ENCODE measurements at regions of chr3 and their contacts with region 1.

Region 1: DNA sequence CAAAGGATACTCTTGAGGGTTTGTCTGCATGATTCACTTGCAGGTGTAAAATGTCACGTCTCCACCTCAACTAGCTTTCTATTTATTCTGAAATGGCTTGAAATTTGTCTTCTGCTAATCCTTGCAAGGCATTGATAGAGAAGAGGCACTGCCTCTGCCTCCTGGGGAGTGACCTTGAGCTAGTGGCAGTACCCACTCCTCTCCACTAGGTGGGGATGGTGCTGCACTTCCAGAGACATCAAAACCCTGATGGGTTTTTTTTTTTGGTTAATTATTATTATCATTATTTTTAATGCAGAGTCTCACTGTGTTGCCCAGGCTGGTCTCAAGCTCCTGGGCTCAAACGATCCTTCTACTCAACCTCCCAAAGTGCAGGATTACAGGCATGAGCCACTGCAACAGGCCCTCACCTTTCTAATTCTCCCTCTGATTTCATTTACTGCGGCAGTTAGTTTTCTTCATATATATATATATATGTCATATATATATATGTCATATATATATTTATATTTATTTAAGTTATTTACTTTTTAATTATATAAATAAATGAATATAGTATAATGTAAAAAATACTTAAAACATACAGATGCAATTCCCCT is 117.6 kb upstream of the EIF1B start:
- H3K4me3 Mint-ChIP-seq: no peak overlapping the region
- H3K27ac Mint-ChIP-seq: no peak overlapping the region
- H3K4me1 Mint-ChIP-seq: no peaks in the 10 kb centered on the region
- H3K27me3 Mint-ChIP-seq: no peaks in the 10 kb centered on the region

Region 2: DNA sequence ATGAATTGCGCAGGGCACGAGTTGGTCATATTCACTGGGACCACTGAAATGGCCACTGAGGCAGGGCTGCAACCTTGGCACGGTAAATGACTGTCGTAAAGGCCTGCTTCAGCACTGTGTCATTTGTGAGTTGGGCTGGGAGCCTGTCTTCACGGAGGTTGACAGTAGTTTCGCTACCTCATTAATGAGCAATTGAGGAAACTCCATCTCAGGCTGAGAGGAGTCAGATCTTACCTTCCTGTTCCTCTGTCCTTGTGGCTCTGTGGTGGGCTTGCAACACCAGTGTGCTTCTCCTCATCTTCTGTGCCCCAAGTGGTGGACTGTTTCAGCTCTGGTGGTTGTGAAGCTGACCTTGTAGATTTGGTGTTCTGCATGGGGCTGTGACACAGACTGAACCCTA is 37.4 kb after region 1 on chr3:
- intact Hi-C with region 1: loop called (anchors 5 kb)
- H3K4me3 Mint-ChIP-seq: no peak overlapping the region
- H3K27ac Mint-ChIP-seq: peak overlapping the region; percentile 53
- H3K4me1 Mint-ChIP-seq: peaks cover 22% of the 10 kb centered on the region
- H3K27me3 Mint-ChIP-seq: peaks cover 7% of the 10 kb centered on the region

Region 3: GRCh38 chr3:40317061-40317855 is 125.3 kb after region 1 on chr3:
- intact Hi-C with region 1: loop called (anchors 1 kb)
- H3K4me3 Mint-ChIP-seq: no peak overlapping the region
- H3K27ac Mint-ChIP-seq: no peak overlapping the region
- H3K4me1 Mint-ChIP-seq: peaks cover 27% of the 10 kb centered on the region
- H3K27me3 Mint-ChIP-seq: no peaks in the 10 kb centered on the region

Region 4: GRCh38 chr3:40524568-40525285 is 332.8 kb after region 1 on chr3 and contains the start of gene ZNF621:
- intact Hi-C with region 1: loop called (anchors 5 kb)
- H3K4me3 Mint-ChIP-seq: peak within 1 kb of the TSS; percentile 88
- H3K27ac Mint-ChIP-seq: peak within 1 kb of the TSS; percentile 98
- H3K4me1 Mint-ChIP-seq: peaks cover 27% of the 10 kb centered on the region
- H3K27me3 Mint-ChIP-seq: no peaks in the 10 kb centered on the region

Region 5: GRCh38 chr3:41872157-41872556 is 1680.2 kb after region 1 on chr3:
- intact Hi-C with region 1: loop called (anchors 10 kb)
- H3K4me3 Mint-ChIP-seq: no peak overlapping the region
- H3K27ac Mint-ChIP-seq: no peak overlapping the region
- H3K4me1 Mint-ChIP-seq: no peaks in the 10 kb centered on the region
- H3K27me3 Mint-ChIP-seq: no peaks in the 10 kb centered on the region